HepG2 (cell line): ENCODE measurements at regions of chr17 and their contacts with region 1.

Region 1: DNA sequence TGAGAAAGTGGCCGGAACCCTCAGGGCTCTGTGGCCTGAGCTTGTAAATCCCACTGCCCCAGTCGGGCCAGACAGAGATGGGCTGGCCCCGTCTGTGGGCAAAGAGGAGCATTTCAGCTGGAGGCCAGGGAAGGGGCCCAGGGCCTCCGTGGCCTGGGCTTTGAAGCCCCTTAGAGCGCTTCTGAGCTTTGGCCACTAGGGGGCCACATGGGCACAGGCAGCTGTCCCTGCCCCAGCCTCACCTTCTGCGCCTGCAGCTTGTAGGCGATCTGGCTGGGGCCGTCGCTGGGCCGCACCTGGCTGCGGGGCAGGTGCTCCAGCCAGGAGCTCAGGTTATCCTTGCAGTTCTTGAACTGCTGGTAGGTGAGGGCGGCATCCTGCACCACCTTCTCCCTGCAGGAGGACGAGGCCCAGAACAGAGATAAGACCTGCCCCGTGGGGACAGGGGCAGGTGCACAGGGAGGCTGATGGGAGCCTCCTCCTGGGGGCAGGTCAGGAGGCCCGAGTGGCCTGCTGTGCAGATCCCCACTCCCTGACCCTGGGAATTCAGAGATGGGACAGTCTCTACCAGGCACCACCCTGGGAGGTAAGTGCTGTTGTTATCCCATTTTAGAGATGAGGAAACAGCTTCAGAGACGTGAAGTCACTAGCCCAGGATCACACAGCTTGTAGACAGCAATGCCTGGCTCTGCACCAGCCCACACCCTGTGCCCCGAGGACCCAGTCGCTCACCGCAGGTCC is 12.8 kb downstream of the EVPL start:
- DNase-seq: peak; percentile 72
- ATAC-seq: peak; percentile 92
- H3K4me3 ChIP-seq: no peak overlapping the region
- H3K27ac ChIP-seq: no peak overlapping the region
- H3K4me1 ChIP-seq: peaks cover 5% of the 10 kb centered on the region; the same call in 1 of the 2 replicates
- H3K27me3 ChIP-seq: no peaks in the 10 kb centered on the region
- CTCF ChIP-seq: peak; percentile 100
- EP300 ChIP-seq: no peak
- POLR2A ChIP-seq: no peak
- RAD21 ChIP-seq: peak; percentile 98

Region 2: GRCh38 chr17:76056835-76057234 is 42.5 kb after region 1 on chr17:
- CTCF ChIA-PET with region 1: interaction called, 7 read pairs
- POLR2A ChIA-PET with region 1: no interaction called
- in situ Hi-C with region 1: no loop called
- intact Hi-C with region 1: loop called (anchors 2 kb)
- DNase-seq: no peak
- ATAC-seq: peak; percentile 56; the same call in 2 of the 3 replicates
- H3K4me3 ChIP-seq: no peak overlapping the region
- H3K27ac ChIP-seq: no peak overlapping the region
- H3K4me1 ChIP-seq: no peaks in the 10 kb centered on the region
- H3K27me3 ChIP-seq: no peaks in the 10 kb centered on the region
- CTCF ChIP-seq: peak; percentile 27
- EP300 ChIP-seq: no peak
- POLR2A ChIP-seq: no peak
- RAD21 ChIP-seq: no peak